BJ (cell line): ENCODE measurements at regions of chr14 and their contacts with region 1.

Region 1: GRCh38 chr14:23910101-23910875 is 43.3 kb upstream of the DHRS4 start:
- DNase-seq: no peak
- H3K4me3 ChIP-seq: no peak overlapping the region
- H3K27me3 ChIP-seq: no peaks in the 10 kb centered on the region
- CTCF ChIP-seq: peak; percentile 91

Region 2: DNA sequence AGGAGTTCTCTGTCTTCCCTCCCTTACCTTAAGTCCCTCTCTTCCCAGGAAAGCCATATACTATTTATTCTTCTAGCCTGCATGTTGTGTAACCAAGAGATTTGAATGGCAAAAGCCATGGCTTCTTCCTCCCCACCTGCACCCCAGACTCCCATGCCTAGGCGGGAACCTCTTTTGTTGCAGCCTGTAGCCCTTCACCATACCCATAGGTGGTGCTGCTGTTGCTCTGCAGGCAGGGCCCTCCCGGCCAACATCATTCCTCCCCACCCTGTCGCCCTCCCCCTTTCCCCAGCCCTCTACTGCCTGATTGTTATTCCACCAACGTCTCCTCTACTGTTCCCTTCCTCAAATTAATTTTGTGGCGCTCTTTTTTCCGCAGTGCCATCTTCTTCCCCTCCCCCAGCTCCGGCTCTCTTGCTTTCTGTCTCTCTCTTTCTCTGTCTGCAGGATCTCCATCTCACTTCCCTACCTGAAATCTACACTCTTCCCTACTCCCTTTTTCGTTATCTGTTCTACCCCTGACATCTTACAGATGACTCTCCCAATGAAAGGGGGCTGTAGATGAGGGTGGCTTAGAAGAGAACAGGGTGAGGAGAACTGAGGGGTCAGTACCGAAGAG is 426.9 kb before region 1 on chr14:
- CTCF ChIA-PET with region 1: no interaction called
- POLR2A ChIA-PET with region 1: no interaction called
- DNase-seq: no peak
- H3K4me3 ChIP-seq: no peak overlapping the region
- H3K27me3 ChIP-seq: no peaks in the 10 kb centered on the region
- CTCF ChIP-seq: peak; percentile 54

Region 3: GRCh38 chr14:23588884-23589598 is 321.2 kb before region 1 on chr14:
- CTCF ChIA-PET with region 1: interaction called, 35 read pairs
- POLR2A ChIA-PET with region 1: no interaction called
- DNase-seq: peak; percentile 13
- H3K4me3 ChIP-seq: no peak overlapping the region
- H3K27me3 ChIP-seq: no peaks in the 10 kb centered on the region
- CTCF ChIP-seq: peak; percentile 83

Region 4: DNA sequence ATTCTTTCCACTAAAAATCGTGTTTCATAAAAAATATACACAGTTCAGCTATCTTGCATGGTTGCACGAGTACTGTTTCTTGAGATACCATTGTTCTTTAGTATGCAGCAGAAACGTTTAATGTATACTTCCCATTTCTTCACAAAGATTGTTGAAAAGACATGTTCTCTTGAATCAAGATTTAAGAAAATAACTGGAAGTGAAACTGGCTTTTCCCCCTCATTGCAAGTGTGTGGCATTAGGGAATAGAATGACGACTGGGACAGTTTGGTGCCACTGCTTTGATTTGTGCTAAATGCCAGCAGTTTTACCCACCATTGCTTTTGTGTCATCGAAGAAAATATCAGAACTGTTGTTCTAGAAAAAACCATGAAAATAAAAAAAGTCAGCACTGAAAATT is 294.4 kb before region 1 on chr14:
- CTCF ChIA-PET with region 1: interaction called, 10 read pairs
- POLR2A ChIA-PET with region 1: no interaction called
- DNase-seq: no peak
- H3K4me3 ChIP-seq: no peak overlapping the region
- H3K27me3 ChIP-seq: peaks cover 2% of the 10 kb centered on the region; the same call in 1 of the 2 replicates
- CTCF ChIP-seq: no peak

Region 5: DNA sequence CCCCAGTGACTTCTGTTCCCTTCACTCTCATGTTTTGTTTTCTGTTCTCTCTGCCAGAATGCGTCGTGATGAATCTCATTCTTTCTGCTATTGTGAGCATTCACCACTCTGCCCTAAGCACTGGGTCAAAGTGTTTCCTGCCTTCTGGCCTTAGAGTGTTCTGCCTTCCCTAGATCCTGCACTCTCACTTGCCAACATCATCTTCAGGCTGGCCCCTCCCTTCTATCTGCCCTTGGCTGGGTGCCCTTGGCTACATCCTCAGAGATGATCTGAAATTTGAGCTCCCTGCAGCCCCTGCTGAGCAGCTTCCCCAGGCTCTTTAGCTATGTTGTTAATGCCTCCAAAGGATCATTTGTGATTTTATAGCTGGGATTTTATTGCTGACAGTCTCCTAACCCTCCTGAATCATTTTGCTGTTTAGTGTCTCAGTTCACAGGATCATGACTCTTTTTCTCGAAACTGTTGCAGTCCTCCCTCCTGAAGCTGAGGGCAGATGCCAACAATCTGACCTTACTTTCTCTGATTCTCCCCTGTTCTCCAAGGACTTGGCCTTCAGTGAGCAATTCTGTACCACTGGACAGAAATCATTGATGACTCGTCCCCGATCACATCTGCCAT is 269.7 kb before region 1 on chr14:
- CTCF ChIA-PET with region 1: interaction called, 20 read pairs
- POLR2A ChIA-PET with region 1: no interaction called
- DNase-seq: peak; percentile 40
- H3K4me3 ChIP-seq: no peak overlapping the region
- H3K27me3 ChIP-seq: no peaks in the 10 kb centered on the region
- CTCF ChIP-seq: no peak

Region 6: DNA sequence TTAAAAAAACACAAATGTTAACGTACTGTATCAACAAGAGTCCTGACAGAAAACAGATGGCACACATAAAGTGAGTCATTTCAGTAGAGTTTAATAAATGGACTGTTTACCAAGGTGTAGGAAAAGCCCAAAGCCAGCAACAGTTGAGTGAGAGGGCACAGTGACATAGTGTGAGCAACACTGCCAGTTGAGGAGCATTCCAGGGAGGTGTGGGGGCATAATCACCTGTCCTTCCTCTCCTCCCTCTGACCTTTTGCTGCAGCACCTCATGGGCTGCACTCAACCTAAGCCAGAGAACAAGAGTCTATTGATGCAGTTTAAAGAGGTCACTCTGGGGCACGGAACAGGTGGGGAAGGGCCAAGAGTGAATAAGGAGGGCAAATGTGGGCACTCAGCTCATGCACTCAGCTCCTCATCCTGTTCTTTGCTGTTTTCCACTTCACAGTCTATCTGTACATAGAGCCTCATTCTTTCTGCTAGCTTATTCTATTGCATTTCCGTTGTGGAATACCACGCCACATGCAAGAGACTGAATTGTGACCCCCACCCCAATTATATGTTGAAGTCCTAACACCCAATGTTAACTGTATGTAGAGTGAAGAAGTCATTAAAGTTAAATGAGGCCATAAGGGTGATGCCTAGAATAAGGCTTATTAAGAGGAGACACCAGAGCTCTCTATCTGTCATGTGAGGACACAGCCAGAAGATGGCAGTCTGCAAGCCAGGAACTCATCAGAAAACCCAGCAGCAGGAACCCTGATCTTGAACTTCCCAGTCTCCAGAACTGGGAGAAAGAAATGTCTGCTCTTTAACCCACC is 244.7 kb before region 1 on chr14:
- CTCF ChIA-PET with region 1: interaction called, 43 read pairs
- POLR2A ChIA-PET with region 1: no interaction called
- DNase-seq: no peak
- H3K4me3 ChIP-seq: no peak overlapping the region
- H3K27me3 ChIP-seq: no peaks in the 10 kb centered on the region
- CTCF ChIP-seq: peak; percentile 71

Region 7: GRCh38 chr14:23727566-23728335 is 182.5 kb before region 1 on chr14:
- CTCF ChIA-PET with region 1: interaction called, 27 read pairs
- POLR2A ChIA-PET with region 1: no interaction called
- DNase-seq: no peak
- H3K4me3 ChIP-seq: no peak overlapping the region
- H3K27me3 ChIP-seq: peaks cover 1% of the 10 kb centered on the region; the same call in 1 of the 2 replicates
- CTCF ChIP-seq: peak; percentile 40

Region 8: GRCh38 chr14:23787436-23787835 is 122.9 kb before region 1 on chr14:
- CTCF ChIA-PET with region 1: no interaction called
- POLR2A ChIA-PET with region 1: no interaction called
- DNase-seq: no peak
- H3K4me3 ChIP-seq: no peak overlapping the region
- H3K27me3 ChIP-seq: no peaks in the 10 kb centered on the region; the same call in 1 of the 2 replicates
- CTCF ChIP-seq: no peak